Activated CD4-positive, alpha-beta memory T cell treated with anti-CD3 and anti-CD28 coated beads for 36 hours (primary cell): ENCODE measurements at regions of chr14 and their contacts with region 1.

Region 1: GRCh38 chr14:68232300-68233055 is 412.9 kb downstream of the RAD51B start:
- DNase-seq: peak; percentile 64
- H3K4me3 Mint-ChIP-seq: no peak overlapping the region
- H3K27ac Mint-ChIP-seq: no peak overlapping the region
- H3K4me1 Mint-ChIP-seq: peaks cover 22% of the 10 kb centered on the region
- H3K27me3 Mint-ChIP-seq: no peaks in the 10 kb centered on the region

Region 2: DNA sequence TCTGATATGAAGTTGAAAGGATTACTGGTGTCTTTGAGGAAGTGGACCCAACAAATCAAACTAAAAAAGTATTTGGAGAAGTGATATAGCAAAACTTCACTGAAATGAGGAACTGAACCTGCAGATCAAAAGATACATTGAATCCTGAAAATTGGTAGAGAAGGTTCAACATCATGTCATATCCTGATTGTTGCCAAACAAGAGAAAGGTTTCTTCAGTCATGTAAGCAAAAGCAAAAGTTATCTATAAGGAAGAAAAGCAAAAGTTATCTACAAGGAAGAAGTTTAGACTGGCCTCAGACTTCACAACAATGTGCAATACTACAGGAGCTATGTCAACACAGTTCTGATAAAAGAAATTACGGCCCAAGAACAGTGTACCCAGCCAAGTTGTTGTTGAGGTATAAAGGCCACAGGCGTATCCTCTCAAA is 270.2 kb before region 1 on chr14:
- CTCF ChIA-PET with region 1: no interaction called
- POLR2A ChIA-PET with region 1: no interaction called
- intact Hi-C with region 1: no loop called
- DNase-seq: no peak
- H3K4me3 Mint-ChIP-seq: no peak overlapping the region
- H3K27ac Mint-ChIP-seq: no peak overlapping the region
- H3K4me1 Mint-ChIP-seq: no peaks in the 10 kb centered on the region
- H3K27me3 Mint-ChIP-seq: no peaks in the 10 kb centered on the region

Region 3: DNA sequence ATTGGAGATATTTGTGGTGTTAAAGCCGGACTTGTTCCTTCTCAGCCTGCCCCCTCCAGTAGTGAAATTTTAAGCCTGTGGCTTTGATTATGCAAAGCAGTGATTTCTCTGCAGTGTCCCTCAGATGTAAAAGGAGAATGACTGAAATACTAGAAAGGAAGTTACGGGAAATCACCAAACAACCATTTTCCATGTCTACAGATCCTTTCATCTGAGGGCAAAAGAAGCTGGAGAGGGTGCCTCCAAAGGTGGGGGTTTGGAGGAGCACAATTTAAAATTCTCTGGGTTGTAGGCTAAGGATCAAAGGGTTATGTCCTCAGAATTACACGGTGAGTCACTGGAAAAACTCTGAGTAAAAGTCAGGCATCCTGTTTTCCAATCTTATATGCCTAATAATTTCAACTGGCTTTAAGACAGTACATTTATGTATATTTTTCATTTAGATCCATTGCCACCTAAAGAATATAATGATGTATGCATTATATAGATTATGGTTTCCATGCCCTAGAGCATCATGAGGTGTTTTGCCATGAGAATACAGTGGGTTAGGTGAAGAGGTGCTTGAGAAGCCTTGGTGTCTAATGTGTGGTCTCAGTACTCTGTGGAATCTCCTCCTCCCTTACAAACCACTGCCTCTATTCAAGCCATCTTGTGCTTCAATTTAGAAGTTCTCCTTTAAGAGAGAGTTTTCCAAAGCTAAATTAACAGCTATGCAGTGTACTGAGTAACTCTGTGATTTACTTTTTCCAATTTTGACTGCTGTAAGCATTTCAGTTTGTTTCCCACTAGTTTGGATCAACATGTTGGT is 50.8 kb before region 1 on chr14:
- CTCF ChIA-PET with region 1: no interaction called
- POLR2A ChIA-PET with region 1: no interaction called
- intact Hi-C with region 1: loop called (anchors 1 kb)
- DNase-seq: no peak
- H3K4me3 Mint-ChIP-seq: no peak overlapping the region
- H3K27ac Mint-ChIP-seq: no peak overlapping the region
- H3K4me1 Mint-ChIP-seq: peaks cover 27% of the 10 kb centered on the region
- H3K27me3 Mint-ChIP-seq: no peaks in the 10 kb centered on the region

Region 4: DNA sequence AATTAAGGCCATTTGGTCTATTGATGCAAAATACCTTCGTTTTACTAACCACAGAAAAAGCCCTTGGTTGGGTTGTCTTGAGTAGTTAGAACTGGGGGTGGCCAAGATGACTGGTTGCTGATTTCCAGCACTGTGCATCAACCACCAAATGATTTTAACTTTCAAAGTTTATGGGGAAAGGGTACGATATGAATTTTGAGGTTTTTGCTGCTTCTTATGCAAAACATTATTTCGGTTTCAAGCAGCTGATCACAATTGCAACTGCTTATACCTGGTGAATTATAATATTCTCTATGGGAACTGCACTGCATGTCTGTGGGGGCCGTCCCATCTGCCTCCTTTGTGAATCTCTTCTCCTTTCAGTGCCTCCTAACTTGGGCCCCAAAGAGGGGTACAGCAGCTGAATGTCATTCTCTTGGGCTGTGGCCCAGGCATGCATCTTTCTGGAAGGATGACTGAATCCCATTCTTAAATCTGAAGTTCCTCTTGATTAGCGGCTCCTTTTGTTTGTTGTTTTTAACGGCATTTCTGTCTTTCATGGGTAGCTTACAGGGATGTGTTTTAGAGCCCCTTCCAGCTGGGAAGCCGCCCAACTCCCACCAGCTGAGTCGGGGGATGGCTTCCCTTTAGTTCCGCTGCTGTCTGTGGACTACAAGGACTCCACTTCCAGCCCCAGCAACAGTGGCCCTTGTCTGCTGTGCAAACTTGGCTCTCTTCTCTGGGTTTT is 80.6 kb after region 1 on chr14:
- CTCF ChIA-PET with region 1: no interaction called
- POLR2A ChIA-PET with region 1: no interaction called
- intact Hi-C with region 1: loop called (anchors 5 kb)
- DNase-seq: peak; percentile 75
- H3K4me3 Mint-ChIP-seq: no peak overlapping the region
- H3K27ac Mint-ChIP-seq: no peak overlapping the region
- H3K4me1 Mint-ChIP-seq: peaks cover 32% of the 10 kb centered on the region
- H3K27me3 Mint-ChIP-seq: peaks cover 3% of the 10 kb centered on the region

Region 5: GRCh38 chr14:68795597-68796417 is 563.3 kb after region 1 on chr14:
- CTCF ChIA-PET with region 1: no interaction called
- POLR2A ChIA-PET with region 1: no interaction called
- intact Hi-C with region 1: loop called (anchors 5 kb)
- DNase-seq: peak; percentile 87
- H3K4me3 Mint-ChIP-seq: peak overlapping the region; percentile 89
- H3K27ac Mint-ChIP-seq: peak overlapping the region; percentile 99
- H3K4me1 Mint-ChIP-seq: peaks cover 48% of the 10 kb centered on the region
- H3K27me3 Mint-ChIP-seq: no peaks in the 10 kb centered on the region

Region 6: DNA sequence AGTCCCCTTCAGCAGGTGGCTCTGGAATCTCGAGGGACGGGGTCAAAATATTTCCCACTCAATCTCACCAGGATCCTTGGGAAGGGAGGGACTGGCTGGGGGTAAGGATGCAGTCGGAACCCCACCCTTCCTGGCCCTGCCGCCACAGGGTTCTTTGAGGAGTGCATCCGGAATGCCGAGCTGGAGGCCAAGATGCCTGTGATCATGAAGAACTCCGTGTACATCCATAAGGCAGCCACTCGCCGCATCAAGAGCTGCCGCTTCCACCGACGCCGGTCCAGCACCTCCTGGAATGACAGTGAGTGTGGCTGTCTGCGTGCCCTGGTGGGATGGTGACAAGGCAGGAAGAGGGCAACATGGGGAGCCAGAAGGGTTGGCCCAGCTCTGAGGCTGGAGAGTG is 1295.2 kb after region 1 on chr14:
- CTCF ChIA-PET with region 1: no interaction called
- POLR2A ChIA-PET with region 1: no interaction called
- intact Hi-C with region 1: no loop called
- DNase-seq: no peak
- H3K4me3 Mint-ChIP-seq: no peak overlapping the region
- H3K27ac Mint-ChIP-seq: no peak overlapping the region
- H3K4me1 Mint-ChIP-seq: no peaks in the 10 kb centered on the region
- H3K27me3 Mint-ChIP-seq: peaks cover 2% of the 10 kb centered on the region